PC-9 (cell line): ENCODE measurements at regions of chr2 and their contacts with region 1.

Region 1: GRCh38 chr2:12317814-12318426 is 398.8 kb upstream of the TRIB2 start:
- DNase-seq: peak; percentile 12 to 86
- H3K4me3 ChIP-seq: no peak overlapping the region; the same call in 1 of the 2 replicates
- H3K27ac ChIP-seq: peak overlapping the region; percentile 92
- H3K4me1 ChIP-seq: peaks cover 44% of the 10 kb centered on the region
- H3K27me3 ChIP-seq: no peaks in the 10 kb centered on the region
- CTCF ChIP-seq: no peak

Region 2: DNA sequence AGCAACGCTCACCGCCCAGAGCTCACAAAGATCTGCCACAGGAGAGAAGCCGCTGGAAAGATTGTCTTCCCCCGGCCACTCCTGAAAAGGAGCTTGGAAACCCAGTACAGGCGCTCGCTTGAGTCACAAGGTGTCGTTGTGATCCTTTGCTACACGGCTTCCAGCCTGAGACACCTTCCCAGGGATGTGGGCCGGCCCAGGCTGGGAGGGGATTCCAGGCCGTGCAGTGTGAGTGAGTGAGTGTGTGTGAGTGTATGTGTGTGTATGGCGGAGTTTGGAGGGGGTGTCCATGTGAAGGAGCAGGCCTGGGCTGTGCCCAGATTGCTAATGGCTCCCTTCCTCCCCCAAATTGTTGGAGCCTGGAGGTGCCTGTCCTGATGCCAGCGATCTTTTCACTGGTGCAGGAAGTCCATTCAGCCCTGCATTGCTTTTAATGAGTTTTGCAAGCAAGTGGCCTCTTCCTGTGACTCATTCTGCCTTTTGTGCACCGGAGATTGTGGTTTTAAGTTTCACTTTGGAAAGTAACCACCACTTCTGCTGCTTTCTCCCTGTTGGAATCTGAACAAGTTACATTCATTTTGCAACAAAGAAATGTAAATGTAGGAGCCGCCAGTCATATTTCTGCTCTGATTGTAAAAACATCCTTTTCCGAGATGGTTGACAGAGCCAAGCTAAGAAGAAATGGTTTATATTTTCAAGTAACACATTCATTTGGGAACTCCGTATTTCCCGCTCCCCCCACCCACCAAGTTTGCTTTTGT is 487.8 kb before region 1 on chr2:
- CTCF ChIA-PET with region 1: no interaction called
- POLR2A ChIA-PET with region 1: no interaction called
- intact Hi-C with region 1: loop called (anchors 1 kb)
- DNase-seq: peak; percentile 85 to 99
- H3K4me3 ChIP-seq: peak overlapping the region; percentile 44
- H3K27ac ChIP-seq: peak overlapping the region; percentile 97
- H3K4me1 ChIP-seq: peaks cover 36% of the 10 kb centered on the region
- H3K27me3 ChIP-seq: no peaks in the 10 kb centered on the region
- CTCF ChIP-seq: peak; percentile 56; the same call in 1 of the 2 replicates

Region 3: DNA sequence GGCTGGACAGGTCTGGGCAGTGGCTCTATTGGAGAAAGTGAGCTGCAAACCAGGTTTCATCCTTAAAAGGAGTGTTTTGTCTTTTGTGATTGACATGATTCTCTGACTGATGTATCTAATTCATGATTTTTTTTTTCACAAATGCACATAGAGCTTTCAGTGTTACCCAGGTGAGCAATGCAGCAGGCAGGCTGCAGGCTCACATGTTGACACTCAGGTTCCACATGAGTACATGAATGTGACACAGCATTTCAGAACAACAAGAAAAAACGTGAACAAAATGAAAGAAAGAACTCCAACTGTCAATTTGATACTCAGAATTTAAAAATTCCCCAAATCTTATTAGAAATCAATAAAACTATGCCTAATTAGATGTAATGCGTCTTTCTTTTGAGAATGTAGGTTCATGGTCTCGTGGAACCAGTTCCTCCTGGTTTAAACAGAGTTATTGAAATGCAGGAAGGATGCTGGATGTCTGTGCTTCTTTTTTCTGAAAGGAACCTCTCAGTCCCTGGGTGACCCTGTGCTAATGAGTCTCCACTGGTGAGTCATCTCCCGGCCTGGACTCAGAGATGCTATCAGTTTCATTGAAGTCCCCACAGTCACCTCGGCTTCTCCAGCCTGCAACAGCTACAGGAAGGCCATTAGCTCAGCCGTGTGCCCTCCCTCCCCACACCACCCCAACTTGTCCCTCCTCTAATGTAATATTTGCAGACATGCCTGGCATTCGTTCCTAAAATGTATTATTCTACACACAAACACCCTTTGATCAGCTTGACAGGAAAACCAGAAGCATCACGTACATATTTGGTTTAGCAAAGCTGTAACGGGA is 141.1 kb before region 1 on chr2:
- CTCF ChIA-PET with region 1: no interaction called
- POLR2A ChIA-PET with region 1: no interaction called
- intact Hi-C with region 1: loop called (anchors 5 kb)
- DNase-seq: peak; percentile 78 to 95
- H3K4me3 ChIP-seq: no peak overlapping the region
- H3K27ac ChIP-seq: peak overlapping the region; percentile 50
- H3K4me1 ChIP-seq: peaks cover 30% of the 10 kb centered on the region
- H3K27me3 ChIP-seq: no peaks in the 10 kb centered on the region
- CTCF ChIP-seq: no peak

Region 4: GRCh38 chr2:12507295-12507694 is 189.4 kb after region 1 on chr2:
- CTCF ChIA-PET with region 1: no interaction called
- POLR2A ChIA-PET with region 1: no interaction called
- intact Hi-C with region 1: loop called (anchors 1 kb)
- DNase-seq: peak; percentile 78 to 98
- H3K4me3 ChIP-seq: no peak overlapping the region
- H3K27ac ChIP-seq: no peak overlapping the region
- H3K4me1 ChIP-seq: peaks cover 38% of the 10 kb centered on the region
- H3K27me3 ChIP-seq: no peaks in the 10 kb centered on the region
- CTCF ChIP-seq: no peak